Tibial artery (tissue), 4 donors: ENCODE measurements at regions of chr6 and their contacts with region 1.

Region 1: GRCh38 chr6:100862063-100862462 is 19.1 kb downstream of the ASCC3 start:
- DNase-seq: no peak
- H3K4me3 ChIP-seq: no peak overlapping the region
- H3K27ac ChIP-seq: no peak overlapping the region
- H3K4me1 ChIP-seq: no peaks in the 10 kb centered on the region
- H3K27me3 ChIP-seq: no peaks in the 10 kb centered on the region
- CTCF ChIP-seq: no peak

Region 2: DNA sequence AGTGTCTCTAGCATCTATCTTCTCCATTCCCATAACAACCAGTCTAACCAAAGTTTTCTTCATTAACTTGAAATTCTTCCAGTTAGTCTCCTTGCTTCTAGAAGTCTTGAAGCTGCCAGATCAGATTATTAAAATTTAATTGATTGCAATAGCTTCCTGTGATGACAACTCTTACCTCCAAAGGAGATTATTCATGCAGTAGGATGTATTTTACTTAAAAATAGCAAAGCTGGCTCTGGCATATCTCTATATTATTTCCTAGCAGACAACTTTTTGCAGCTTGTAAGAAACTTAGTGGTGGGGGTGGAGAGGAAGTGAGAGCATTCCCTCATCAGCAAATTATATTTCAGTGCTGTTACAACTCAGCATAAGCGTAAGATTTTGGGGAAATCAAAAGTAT is 821.8 kb after region 1 on chr6:
- intact Hi-C with region 1: loop called (anchors 10 kb)
- DNase-seq: no peak
- H3K4me3 ChIP-seq: no peak overlapping the region
- H3K27ac ChIP-seq: no peak overlapping the region
- H3K4me1 ChIP-seq: no peaks in the 10 kb centered on the region
- H3K27me3 ChIP-seq: no peaks in the 10 kb centered on the region
- CTCF ChIP-seq: no peak